ENCODE measurements at regions of chr20 and their contacts with region 1.

Region 1: GRCh38 chr20:58481481-58482021 is 33.6 kb downstream of the APCDD1L start:
- DNase-seq: peak; percentile 55
- H3K4me3 Mint-ChIP-seq: no peak overlapping the region
- H3K27ac Mint-ChIP-seq: no peak overlapping the region
- H3K4me1 Mint-ChIP-seq: peaks cover 3% of the 10 kb centered on the region
- H3K27me3 Mint-ChIP-seq: peaks cover 28% of the 10 kb centered on the region

Region 2: DNA sequence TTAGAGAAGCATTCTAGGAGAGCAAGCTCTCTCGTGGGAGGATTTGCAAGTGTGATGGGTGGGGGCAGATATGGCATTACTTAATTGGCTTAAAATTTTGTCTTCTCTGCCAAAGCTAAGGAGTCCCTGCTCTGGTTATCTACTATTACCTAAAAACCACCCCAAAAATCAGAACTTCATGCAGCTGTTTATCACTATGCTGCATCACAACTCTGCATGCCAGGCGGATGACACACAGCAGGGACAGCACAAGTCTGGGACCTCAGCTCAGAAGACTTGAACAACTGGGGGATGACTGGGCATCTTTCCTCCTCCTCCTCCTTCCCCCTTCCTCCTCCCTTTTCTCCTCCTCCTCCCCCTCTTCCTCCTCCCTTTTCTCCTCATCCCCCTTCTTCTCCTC is 553.4 kb before region 1 on chr20:
- CTCF ChIA-PET with region 1: no interaction called
- DNase-seq: no peak
- H3K4me3 Mint-ChIP-seq: no peak overlapping the region
- H3K27ac Mint-ChIP-seq: no peak overlapping the region
- H3K4me1 Mint-ChIP-seq: no peaks in the 10 kb centered on the region
- H3K27me3 Mint-ChIP-seq: peaks cover 12% of the 10 kb centered on the region

Region 3: GRCh38 chr20:58839474-58839874 is 357.9 kb after region 1 on chr20:
- CTCF ChIA-PET with region 1: interaction called, 14 read pairs
- DNase-seq: peak; percentile 64
- H3K4me3 Mint-ChIP-seq: no peak overlapping the region
- H3K27ac Mint-ChIP-seq: no peak overlapping the region
- H3K4me1 Mint-ChIP-seq: peaks cover 21% of the 10 kb centered on the region
- H3K27me3 Mint-ChIP-seq: peaks cover 79% of the 10 kb centered on the region

Measured in activated naive CD4-positive, alpha-beta T cell treated with anti-CD3 and anti-CD28 coated beads, Interleukin-2, amount 10 ng/mL, durations not matched to agents 7 days and 5 days (primary cell).